Heart left ventricle (tissue), 16 donors: ENCODE measurements at regions of chr16 and their contacts with region 1.

Region 1: DNA sequence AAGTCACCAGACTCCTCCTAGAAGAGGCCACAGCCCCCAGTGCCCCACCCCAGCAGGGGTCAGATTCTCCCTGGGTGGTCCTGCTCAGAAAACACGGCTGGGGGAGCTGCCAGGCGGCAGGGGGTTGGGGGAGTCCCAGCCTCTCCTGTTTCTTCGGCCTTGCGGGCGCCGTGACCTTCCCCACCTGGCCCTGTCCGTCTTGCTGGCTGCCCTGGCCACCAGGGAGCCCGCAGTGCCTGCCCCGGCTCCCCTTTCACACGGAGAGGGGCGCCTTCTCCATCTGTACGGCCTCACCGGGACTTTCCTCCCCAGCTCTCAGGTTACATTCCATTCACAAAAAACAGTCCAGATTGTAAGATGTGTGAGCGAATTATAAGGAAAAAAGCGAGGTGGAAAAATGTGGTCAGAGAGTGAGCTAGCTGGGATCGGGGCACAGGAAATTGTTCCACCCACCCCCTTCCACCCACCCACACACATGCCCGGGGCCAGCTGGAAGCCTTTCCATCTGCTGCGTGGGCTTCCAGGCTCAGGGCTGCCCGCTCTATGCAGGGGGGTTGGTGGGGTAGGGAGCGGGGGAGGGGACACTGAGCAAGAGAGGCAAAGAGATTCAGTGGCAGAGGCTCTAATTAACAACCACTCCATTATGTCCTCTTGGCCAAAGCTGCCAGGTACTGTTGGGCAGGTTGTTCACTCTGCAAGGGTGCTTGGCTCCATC is 14.6 kb upstream of the CIBAR2 start:
- DNase-seq: no peak
- ATAC-seq: peak in 3 of 4 donors; percentile 17 to 27 (median 23)
- H3K4me3 ChIP-seq: no peak overlapping the region
- H3K27ac ChIP-seq: peak overlapping the region in 6 of 12 donors; percentile 18 to 79 (median 60)
- H3K4me1 ChIP-seq: peaks cover 0 to 62% (median 42%) of the 10 kb centered on the region in 12 donors
- H3K27me3 ChIP-seq: no peaks in the 10 kb centered on the region
- CTCF ChIP-seq: no peak
- POLR2A ChIP-seq: no peak

Region 2: GRCh38 chr16:85072947-85073346 is 53.9 kb before region 1 on chr16:
- intact Hi-C with region 1: no loop called
- DNase-seq: peak in 3 of 5 donors; percentile 52 to 76 (median 63)
- ATAC-seq: peak; percentile 35 to 91 (median 78)
- H3K4me3 ChIP-seq: no peak overlapping the region
- H3K27ac ChIP-seq: no peak overlapping the region
- H3K4me1 ChIP-seq: peaks cover 0 to 11% (median 0%) of the 10 kb centered on the region in 12 donors
- H3K27me3 ChIP-seq: no peaks in the 10 kb centered on the region
- CTCF ChIP-seq: no peak
- POLR2A ChIP-seq: no peak

Region 3: GRCh38 chr16:85220125-85220839 is 93.4 kb after region 1 on chr16:
- intact Hi-C with region 1: loop called in 2 of 10 experiments (anchors 5 to 10 kb)
- DNase-seq: peak; percentile 77 to 88 (median 86)
- ATAC-seq: peak; percentile 63 to 89 (median 88)
- H3K4me3 ChIP-seq: peak overlapping the region in 10 of 12 donors; percentile 20 to 51 (median 38)
- H3K27ac ChIP-seq: peak overlapping the region in 11 of 12 donors; percentile 54 to 82 (median 70)
- H3K4me1 ChIP-seq: peaks cover 6 to 20% (median 16%) of the 10 kb centered on the region in 12 donors
- H3K27me3 ChIP-seq: no peaks in the 10 kb centered on the region
- CTCF ChIP-seq: peak in 2 of 12 donors; percentile 23 to 41
- POLR2A ChIP-seq: no peak

Region 4: DNA sequence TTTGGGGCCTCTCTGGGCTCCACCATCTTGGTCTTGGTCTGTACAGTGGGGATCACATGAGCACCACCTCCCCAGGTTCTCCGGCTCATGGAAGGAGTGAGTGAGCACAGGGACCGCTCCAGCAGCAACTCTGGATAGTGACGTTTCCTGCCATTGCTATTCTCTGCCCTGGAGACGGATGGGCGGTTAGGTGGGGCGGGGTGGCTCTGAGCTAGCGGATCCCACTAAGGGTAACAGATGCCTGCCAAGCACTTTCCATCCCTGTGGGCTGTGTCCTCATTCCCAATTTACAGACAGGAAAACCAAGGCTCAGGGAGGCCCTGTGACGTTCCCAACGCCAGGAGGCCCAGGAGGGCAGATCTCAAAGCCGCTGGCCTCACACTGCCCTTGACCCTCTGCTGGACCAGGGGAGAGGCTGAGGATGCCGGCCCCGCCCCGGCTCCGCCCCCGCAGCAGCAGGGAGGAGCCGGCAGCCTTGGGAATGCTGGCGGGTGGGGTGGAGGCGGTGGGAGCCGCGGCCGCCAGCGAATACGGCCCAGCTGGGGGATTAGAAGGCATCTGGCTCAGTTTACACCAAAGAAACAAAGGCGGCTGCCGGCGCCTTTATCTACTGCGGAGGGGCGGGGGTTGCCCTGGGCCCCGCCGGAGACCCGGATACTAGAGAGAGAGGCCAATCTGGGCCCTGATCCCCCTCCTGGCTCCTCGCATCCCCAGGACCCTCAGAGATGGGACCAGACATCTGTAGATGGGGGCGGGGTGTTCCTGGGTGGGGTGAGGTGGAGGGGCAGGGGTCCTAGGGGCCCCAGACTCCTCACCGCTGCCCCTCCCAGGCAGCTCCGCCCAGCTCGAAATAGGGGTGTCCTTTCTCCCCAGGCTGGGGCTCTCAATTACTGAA is 107.7 kb after region 1 on chr16:
- intact Hi-C with region 1: loop called in 7 of 10 experiments (anchors 5 to 10 kb)
- DNase-seq: peak; percentile 70 to 83 (median 76)
- ATAC-seq: peak; percentile 37 to 77 (median 66)
- H3K4me3 ChIP-seq: peak overlapping the region in 10 of 12 donors; percentile 15 to 58 (median 48)
- H3K27ac ChIP-seq: peak overlapping the region in 9 of 12 donors; percentile 12 to 79 (median 47)
- H3K4me1 ChIP-seq: peaks cover 2 to 63% (median 36%) of the 10 kb centered on the region in 12 donors
- H3K27me3 ChIP-seq: peaks cover 0 to 16% (median 0%) of the 10 kb centered on the region in 9 donors
- CTCF ChIP-seq: no peak
- POLR2A ChIP-seq: no peak

Region 5: GRCh38 chr16:85554112-85554813 is 427.4 kb after region 1 on chr16:
- intact Hi-C with region 1: loop called in 1 of 10 experiments (anchors 10 kb)
- DNase-seq: peak in 4 of 5 donors; percentile 73 to 83 (median 80)
- ATAC-seq: peak; percentile 40 to 64 (median 54)
- H3K4me3 ChIP-seq: peak overlapping the region; percentile 63 to 96 (median 79)
- H3K27ac ChIP-seq: peak overlapping the region; percentile 47 to 99 (median 90)
- H3K4me1 ChIP-seq: peaks cover 0 to 66% (median 31%) of the 10 kb centered on the region in 12 donors
- H3K27me3 ChIP-seq: no peaks in the 10 kb centered on the region
- CTCF ChIP-seq: no peak
- POLR2A ChIP-seq: no peak